Right ventricle myocardium inferior (tissue), 1 donor: ENCODE measurements at regions of chr18 and their contacts with region 1.

Region 1: GRCh38 chr18:23032030-23032582 is 99.0 kb downstream of the RBBP8 start:
- DNase-seq: no peak
- ATAC-seq: no peak

Region 2: GRCh38 chr18:23412351-23412964 is 380.4 kb after region 1 on chr18:
- intact Hi-C with region 1: loop called (anchors 5 kb)
- DNase-seq: no peak
- ATAC-seq: no peak